ENCODE measurements at regions of chr7 and their contacts with region 1.

Region 1: DNA sequence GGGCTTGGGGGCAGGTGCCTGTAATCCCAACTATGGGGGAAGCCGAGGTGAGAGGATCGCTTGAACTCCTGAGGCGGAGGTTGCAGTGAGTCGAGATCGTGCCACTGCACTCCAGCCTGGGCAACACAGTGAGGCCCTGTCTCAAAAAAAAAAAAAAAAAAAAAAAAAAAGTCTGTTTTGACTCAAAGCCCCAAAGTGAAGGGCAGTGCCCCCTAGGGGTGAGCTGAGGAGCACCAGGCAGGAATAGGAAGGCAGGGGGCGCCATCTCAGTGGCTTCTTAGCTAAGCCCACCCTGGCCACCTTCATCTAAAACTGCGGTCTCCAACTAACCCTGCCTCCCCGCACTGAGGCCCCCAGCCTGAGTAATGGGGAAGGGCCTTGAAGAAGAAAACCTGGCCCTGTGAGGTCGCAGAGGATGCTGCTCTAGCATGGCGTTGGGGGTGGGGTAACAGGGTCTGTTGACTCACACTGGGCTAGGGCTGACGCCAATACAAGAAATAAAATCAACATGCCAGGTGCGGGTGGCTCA is 9.8 kb downstream of the PODXL start:
- DNase-seq: peak; percentile 73
- H3K4me3 Mint-ChIP-seq: no peak overlapping the region
- H3K27ac Mint-ChIP-seq: no peak overlapping the region
- H3K4me1 Mint-ChIP-seq: no peaks in the 10 kb centered on the region
- H3K27me3 Mint-ChIP-seq: peaks cover 1% of the 10 kb centered on the region

Region 2: DNA sequence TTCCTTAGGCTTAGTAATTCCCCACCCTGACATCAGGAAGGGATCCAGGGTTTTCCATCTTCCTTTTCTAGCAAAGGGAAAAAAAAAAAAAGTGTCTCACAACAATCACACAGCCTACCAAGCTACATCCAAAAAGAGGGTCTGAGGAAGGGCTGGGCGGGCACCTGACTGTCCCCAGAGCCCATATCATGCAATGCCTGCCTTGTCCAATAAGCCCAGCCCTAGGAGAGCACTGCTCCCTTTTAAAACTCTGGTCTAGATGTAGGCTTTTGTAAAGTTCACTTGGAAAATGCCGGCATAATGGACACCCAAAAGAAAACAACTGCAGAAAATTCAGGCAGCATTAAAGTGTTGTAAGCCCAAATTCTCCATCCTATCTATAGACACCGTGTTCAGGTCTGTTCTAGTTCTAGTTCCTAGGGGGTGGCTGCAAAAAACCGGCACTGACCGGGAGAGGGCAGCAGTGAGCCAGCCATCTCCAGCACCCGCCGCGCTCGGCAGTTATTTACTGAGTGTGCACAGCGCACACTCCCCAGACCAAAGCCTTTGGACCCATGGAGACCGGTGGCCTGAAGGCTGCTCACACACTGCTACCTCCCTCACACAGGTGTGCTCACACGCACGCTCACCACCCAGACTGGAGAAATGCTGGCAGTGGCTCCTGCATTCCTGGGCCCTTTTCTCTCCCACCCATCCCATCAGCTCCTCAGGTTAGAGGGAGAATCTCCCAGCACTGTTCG is 38.9 kb before region 1 on chr7:
- CTCF ChIA-PET with region 1: interaction called, 24 read pairs
- POLR2A ChIA-PET with region 1: no interaction called
- intact Hi-C with region 1: loop called (anchors 5 kb)
- DNase-seq: peak; percentile 88
- H3K4me3 Mint-ChIP-seq: peak overlapping the region; percentile 20
- H3K27ac Mint-ChIP-seq: no peak overlapping the region
- H3K4me1 Mint-ChIP-seq: peaks cover 18% of the 10 kb centered on the region
- H3K27me3 Mint-ChIP-seq: peaks cover 9% of the 10 kb centered on the region

Region 3: DNA sequence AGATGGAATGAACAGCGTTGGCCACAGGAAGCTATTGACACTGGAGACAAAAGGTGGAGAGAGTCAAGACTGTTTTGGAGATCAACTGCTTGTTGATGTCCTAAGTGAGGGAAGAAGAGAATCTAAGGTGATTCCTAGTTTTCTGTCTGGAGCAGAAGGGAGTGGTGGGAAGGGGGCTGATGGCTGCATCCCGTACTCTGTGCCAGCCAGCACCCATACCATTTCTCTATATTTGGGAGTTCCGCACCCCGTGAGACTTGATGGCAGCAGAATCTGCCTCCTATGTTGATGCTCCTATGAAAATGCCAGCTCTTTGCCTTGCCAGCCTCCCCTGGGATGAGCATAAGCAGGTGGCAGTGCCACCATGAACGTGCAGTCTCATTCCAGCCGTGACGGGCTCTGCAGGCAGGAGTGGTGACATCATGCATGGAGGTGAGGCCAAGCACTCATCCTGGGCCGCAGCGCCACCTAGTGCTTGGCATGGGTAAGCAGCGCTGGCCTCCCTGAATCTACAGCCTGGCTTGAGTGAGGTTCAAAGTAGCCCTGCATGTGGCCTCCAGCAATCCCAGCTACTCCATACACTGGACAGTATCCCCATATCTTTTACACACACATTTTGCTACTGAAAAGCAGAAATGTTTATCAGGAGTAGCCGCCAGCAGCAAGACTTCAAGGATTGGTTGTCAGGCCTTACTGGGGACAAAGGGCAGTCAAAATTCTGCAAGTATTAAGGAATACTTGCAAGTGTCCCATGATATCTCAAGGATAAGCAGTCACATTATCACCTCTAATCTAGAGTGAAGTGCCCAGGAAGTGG is 33.2 kb before region 1 on chr7:
- CTCF ChIA-PET with region 1: interaction called, 24 read pairs
- POLR2A ChIA-PET with region 1: no interaction called
- intact Hi-C with region 1: loop called (anchors 5 kb)
- DNase-seq: peak; percentile 88
- H3K4me3 Mint-ChIP-seq: no peak overlapping the region
- H3K27ac Mint-ChIP-seq: no peak overlapping the region
- H3K4me1 Mint-ChIP-seq: peaks cover 12% of the 10 kb centered on the region
- H3K27me3 Mint-ChIP-seq: peaks cover 6% of the 10 kb centered on the region

Region 4: DNA sequence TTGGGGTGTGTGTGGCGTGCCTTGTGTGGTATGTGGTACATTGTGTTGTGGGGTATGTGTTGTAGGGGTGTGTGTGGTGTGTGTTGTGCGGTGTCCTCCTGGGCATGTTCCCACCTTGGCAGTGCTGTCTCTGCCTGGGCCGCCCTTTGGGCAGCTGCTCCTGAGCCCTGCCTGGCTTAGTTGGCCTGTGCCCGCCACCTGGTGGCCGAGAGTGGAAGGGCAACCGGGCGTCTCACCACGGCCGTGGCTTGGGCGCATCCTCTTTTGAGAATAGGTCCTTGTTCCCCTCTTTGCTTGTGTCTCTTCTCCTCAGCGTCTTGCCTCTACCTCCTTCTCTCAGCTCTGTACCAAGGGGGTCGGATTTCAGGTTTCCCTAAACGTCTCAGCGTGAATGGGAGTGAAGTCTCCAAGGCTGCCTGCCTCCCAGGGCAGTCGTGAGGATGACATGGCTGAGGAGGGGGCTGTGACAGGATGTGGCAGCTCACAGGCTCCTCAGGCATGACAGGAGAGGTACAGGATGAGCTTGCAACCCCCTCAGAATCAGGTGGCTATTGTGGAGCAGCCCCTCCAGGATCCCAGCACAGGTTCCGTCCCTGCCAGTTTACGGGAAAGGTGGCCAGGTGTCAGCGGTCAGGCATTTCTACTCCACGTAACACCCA is 108.2 kb after region 1 on chr7:
- CTCF ChIA-PET with region 1: interaction called, 9 read pairs
- POLR2A ChIA-PET with region 1: no interaction called
- intact Hi-C with region 1: loop called (anchors 2 kb)
- DNase-seq: peak; percentile 88
- H3K4me3 Mint-ChIP-seq: no peak overlapping the region
- H3K27ac Mint-ChIP-seq: no peak overlapping the region
- H3K4me1 Mint-ChIP-seq: no peaks in the 10 kb centered on the region
- H3K27me3 Mint-ChIP-seq: peaks cover 4% of the 10 kb centered on the region